ENCODE measurements at regions of chr6 and their contacts with region 1.

Region 1: DNA sequence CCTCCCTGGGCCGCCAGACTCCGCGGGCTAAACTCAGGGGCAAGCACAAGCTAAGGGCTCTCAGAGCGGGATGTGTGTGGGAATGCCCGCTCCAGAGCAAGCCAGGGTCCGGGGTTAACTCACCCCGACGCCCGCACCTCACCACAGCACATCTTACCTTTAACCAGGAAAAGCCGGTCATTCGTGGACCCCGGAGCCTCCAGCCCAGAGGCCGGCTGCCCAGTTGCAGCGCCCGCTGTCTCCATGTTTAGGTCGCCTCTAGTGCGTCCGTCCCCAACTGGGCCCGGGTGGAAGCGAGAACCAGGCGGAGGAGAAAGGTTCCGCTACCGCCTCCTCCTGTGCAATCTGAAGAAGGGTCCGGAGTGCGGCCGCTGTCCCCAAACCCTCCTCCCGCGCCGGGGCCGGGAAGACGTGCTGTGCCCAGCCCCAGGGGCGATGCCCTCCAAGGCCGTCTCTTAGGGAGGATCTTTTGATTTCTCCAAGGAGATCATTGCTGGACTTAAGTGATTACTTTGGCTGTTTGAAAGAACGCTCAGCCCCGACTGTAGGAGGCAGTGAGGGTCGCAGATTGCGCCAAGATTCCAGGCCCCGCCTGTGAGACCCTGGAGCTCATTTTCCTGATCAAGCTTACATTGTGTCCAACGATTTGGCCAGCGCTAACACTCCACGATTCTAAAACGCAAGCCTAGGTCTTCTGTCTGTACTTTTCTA is at the start of gene TMEM242:
- DNase-seq: peak; percentile 93
- H3K4me3 Mint-ChIP-seq: peak within 1 kb of the TSS; percentile 81
- H3K27ac Mint-ChIP-seq: peak within 1 kb of the TSS; percentile 87
- H3K4me1 Mint-ChIP-seq: no peaks in the 10 kb centered on the region
- H3K27me3 Mint-ChIP-seq: no peaks in the 10 kb centered on the region
- CTCF ChIP-seq: no peak
- total RNA-seq, gene TMEM242: 9.4 and 10.1 TPM in 2 replicates

Region 2: DNA sequence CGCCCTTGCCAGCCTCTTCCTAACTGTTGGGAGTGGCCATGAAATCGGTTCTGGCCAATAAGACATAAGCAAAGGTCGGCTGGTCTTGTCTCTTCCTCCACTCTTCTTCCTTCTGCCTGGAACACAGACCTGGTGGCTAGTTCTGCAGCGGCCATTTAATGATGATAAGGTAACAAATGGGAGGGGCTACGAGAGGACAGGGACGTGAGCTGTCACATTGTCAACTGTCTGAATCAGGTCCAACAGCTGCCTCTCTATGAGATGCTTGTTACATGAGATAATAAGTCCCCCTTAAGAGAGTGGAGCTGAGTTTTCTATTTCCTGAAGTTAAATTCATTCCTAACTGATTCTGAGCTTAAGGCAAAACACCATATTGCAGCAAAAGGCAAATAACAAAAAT is 12.4 kb after region 1 on chr6:
- CTCF ChIA-PET with region 1: interaction called, 4 read pairs
- POLR2A ChIA-PET with region 1: interaction called, 12 read pairs
- intact Hi-C with region 1: no loop called
- DNase-seq: no peak
- H3K4me3 Mint-ChIP-seq: no peak overlapping the region
- H3K27ac Mint-ChIP-seq: no peak overlapping the region
- H3K4me1 Mint-ChIP-seq: no peaks in the 10 kb centered on the region
- H3K27me3 Mint-ChIP-seq: peaks cover 1% of the 10 kb centered on the region
- CTCF ChIP-seq: no peak

Region 3: DNA sequence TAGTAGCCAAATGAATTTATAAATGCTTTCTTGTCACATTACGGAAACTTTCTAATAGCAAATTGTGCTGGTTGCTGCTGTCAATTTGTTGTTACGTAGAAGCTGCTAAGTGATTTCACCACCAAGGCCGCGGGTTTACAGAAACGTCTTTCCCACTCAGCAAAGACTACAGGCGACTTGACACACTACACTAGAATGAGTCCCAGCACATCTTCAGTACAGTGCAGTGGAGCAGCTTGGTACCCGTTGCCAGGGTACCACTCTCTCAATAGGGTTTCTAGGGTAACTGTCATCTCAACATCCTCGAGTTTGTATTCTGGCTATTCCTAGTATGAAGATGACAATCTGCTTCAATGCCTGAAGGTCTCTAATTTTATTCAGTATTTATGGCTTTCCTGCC is 34.9 kb after region 1 on chr6:
- CTCF ChIA-PET with region 1: no interaction called
- POLR2A ChIA-PET with region 1: interaction called, 10 read pairs
- intact Hi-C with region 1: no loop called
- DNase-seq: no peak
- H3K4me3 Mint-ChIP-seq: no peak overlapping the region
- H3K27ac Mint-ChIP-seq: no peak overlapping the region
- H3K4me1 Mint-ChIP-seq: no peaks in the 10 kb centered on the region
- H3K27me3 Mint-ChIP-seq: peaks cover 9% of the 10 kb centered on the region
- CTCF ChIP-seq: no peak

Region 4: GRCh38 chr6:157614026-157614568 is 290.7 kb after region 1 on chr6:
- CTCF ChIA-PET with region 1: no interaction called
- POLR2A ChIA-PET with region 1: interaction called, 19 read pairs
- intact Hi-C with region 1: no loop called
- DNase-seq: no peak
- H3K4me3 Mint-ChIP-seq: no peak overlapping the region
- H3K27ac Mint-ChIP-seq: peak overlapping the region; percentile 88
- H3K4me1 Mint-ChIP-seq: peaks cover 24% of the 10 kb centered on the region
- H3K27me3 Mint-ChIP-seq: no peaks in the 10 kb centered on the region
- CTCF ChIP-seq: peak; percentile 5

Region 5: GRCh38 chr6:157830354-157831017 is 507.1 kb after region 1 on chr6:
- CTCF ChIA-PET with region 1: no interaction called
- POLR2A ChIA-PET with region 1: interaction called, 12 read pairs
- intact Hi-C with region 1: no loop called
- DNase-seq: no peak
- H3K4me3 Mint-ChIP-seq: no peak overlapping the region
- H3K27ac Mint-ChIP-seq: no peak overlapping the region
- H3K4me1 Mint-ChIP-seq: peaks cover 41% of the 10 kb centered on the region
- H3K27me3 Mint-ChIP-seq: no peaks in the 10 kb centered on the region
- CTCF ChIP-seq: no peak

Measured in MCF 10A (cell line).